CD4-positive, alpha-beta T cell (primary cell): ENCODE measurements at regions of chr1 and their contacts with region 1.

Region 1: GRCh38 chr1:17335821-17336710 is 28.1 kb downstream of the PADI4 start:
- DNase-seq: peak; percentile 41 to 71 (median 45)
- ATAC-seq: peak; percentile 43
- H3K4me3 ChIP-seq: no peak overlapping the region
- H3K4me3 Mint-ChIP-seq: no peak overlapping the region
- H3K27ac ChIP-seq: no peak overlapping the region
- H3K27ac Mint-ChIP-seq: no peak overlapping the region
- H3K4me1 ChIP-seq: peaks cover 3% of the 10 kb centered on the region
- H3K4me1 Mint-ChIP-seq: no peaks in the 10 kb centered on the region
- H3K27me3 ChIP-seq: peaks cover 2 to 3% of the 10 kb centered on the region in 2 experiments
- H3K27me3 Mint-ChIP-seq: peaks cover 25% of the 10 kb centered on the region
- CTCF ChIP-seq: peak; percentile 72

Region 2: GRCh38 chr1:17027403-17027802 is 308.7 kb before region 1 on chr1:
- CTCF ChIA-PET with region 1: no interaction called
- POLR2A ChIA-PET with region 1: no interaction called
- intact Hi-C with region 1: no loop called
- DNase-seq: no peak
- ATAC-seq: no peak
- H3K4me3 ChIP-seq: no peak overlapping the region
- H3K4me3 Mint-ChIP-seq: no peak overlapping the region
- H3K27ac ChIP-seq: no peak overlapping the region
- H3K27ac Mint-ChIP-seq: no peak overlapping the region
- H3K4me1 ChIP-seq: no peaks in the 10 kb centered on the region
- H3K4me1 Mint-ChIP-seq: no peaks in the 10 kb centered on the region
- H3K27me3 ChIP-seq: no peaks in the 10 kb centered on the region
- H3K27me3 Mint-ChIP-seq: no peaks in the 10 kb centered on the region
- CTCF ChIP-seq: no peak

Region 3: GRCh38 chr1:17059739-17060460 is 276.2 kb before region 1 on chr1:
- CTCF ChIA-PET with region 1: no interaction called
- POLR2A ChIA-PET with region 1: no interaction called
- intact Hi-C with region 1: loop called in 1 of 2 experiments (anchors 5 kb)
- DNase-seq: peak in 7 of 14 experiments; percentile 6 to 72 (median 25)
- ATAC-seq: peak; percentile 68
- H3K4me3 ChIP-seq: no peak overlapping the region
- H3K4me3 Mint-ChIP-seq: no peak overlapping the region
- H3K27ac ChIP-seq: no peak overlapping the region
- H3K27ac Mint-ChIP-seq: no peak overlapping the region
- H3K4me1 ChIP-seq: no peaks in the 10 kb centered on the region
- H3K4me1 Mint-ChIP-seq: no peaks in the 10 kb centered on the region
- H3K27me3 ChIP-seq: no peaks in the 10 kb centered on the region
- H3K27me3 Mint-ChIP-seq: peaks cover 10% of the 10 kb centered on the region
- CTCF ChIP-seq: no peak

Region 4: GRCh38 chr1:17125756-17126237 is 210.3 kb before region 1 on chr1:
- CTCF ChIA-PET with region 1: no interaction called
- POLR2A ChIA-PET with region 1: no interaction called
- intact Hi-C with region 1: loop called (anchors 5 to 10 kb)
- DNase-seq: peak; percentile 66 to 91 (median 80)
- ATAC-seq: peak; percentile 76
- H3K4me3 ChIP-seq: no peak overlapping the region
- H3K4me3 Mint-ChIP-seq: no peak overlapping the region
- H3K27ac ChIP-seq: no peak overlapping the region
- H3K27ac Mint-ChIP-seq: no peak overlapping the region
- H3K4me1 ChIP-seq: peaks cover 4% of the 10 kb centered on the region
- H3K4me1 Mint-ChIP-seq: peaks cover 5% of the 10 kb centered on the region
- H3K27me3 ChIP-seq: no peaks in the 10 kb centered on the region
- H3K27me3 Mint-ChIP-seq: peaks cover 21% of the 10 kb centered on the region
- CTCF ChIP-seq: peak; percentile 97

Region 5: DNA sequence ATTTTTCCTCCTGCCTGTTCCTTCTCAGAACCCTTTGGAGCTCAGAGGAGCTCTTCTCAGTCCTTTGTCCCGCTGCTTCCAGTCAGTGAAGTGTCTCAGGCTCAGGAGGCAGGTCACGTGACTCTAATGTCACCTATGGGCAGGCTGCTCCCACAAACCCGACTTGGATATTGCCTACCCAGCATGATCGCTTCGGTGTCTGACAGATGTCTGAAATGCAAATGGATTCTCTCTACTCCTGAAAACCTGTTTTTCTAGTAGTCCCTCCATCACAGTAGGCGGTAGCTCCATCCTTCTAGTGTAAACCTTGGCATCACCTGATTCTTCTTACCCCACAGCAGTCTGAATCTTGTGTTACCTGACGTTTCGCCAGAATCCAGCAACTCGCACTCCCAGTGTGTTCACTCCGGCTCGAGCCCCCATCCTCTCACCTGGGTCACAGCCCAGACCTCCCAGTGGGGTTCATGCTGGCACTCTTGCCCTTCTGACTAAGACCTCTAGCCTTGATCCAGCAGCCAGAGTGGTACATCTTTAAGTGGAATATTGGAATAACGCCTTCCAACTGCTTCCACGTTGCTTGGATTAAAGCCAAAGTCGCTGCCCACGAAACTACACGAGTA is 41.4 kb after region 1 on chr1:
- CTCF ChIA-PET with region 1: no interaction called
- POLR2A ChIA-PET with region 1: no interaction called
- intact Hi-C with region 1: no loop called
- DNase-seq: no peak
- ATAC-seq: no peak
- H3K4me3 ChIP-seq: no peak overlapping the region
- H3K4me3 Mint-ChIP-seq: no peak overlapping the region
- H3K27ac ChIP-seq: no peak overlapping the region
- H3K27ac Mint-ChIP-seq: no peak overlapping the region
- H3K4me1 ChIP-seq: no peaks in the 10 kb centered on the region
- H3K4me1 Mint-ChIP-seq: no peaks in the 10 kb centered on the region
- H3K27me3 ChIP-seq: peaks cover 3 to 7% of the 10 kb centered on the region in 2 experiments
- H3K27me3 Mint-ChIP-seq: peaks cover 19% of the 10 kb centered on the region
- CTCF ChIP-seq: no peak

Region 6: DNA sequence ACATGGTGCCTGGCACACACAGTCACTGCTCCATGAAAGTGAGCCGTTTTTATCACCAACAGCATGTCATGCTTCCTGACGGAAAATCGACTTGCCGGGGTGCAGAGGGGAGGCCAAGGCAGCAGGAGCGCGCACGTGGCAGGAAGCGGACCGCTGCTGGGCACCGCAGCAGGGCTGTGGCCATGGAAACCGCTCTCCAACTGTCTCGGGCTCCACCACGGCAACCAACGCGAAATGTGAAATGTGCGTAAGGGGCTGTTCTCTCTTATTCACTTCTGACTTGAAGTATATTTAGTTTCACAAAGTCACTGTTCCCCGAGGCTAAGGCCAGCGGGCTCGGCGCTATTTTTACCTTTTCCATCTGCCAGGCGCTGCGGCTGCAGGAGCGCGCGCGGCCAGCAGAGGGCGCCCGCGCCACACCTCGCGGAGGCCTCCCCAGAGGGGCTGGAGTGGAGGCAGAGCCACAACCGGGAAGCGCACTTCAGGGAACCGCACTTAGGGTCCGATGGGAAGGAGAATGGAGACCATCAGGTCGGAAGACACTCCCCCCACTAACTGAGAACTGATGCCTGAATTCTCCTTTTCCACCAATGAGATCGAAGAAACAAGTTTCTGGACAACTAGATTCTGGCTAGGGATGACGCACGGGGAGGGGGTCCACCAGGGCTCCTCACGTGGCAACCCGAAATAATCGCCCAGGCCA is 83.7 kb after region 1 on chr1:
- CTCF ChIA-PET with region 1: no interaction called
- POLR2A ChIA-PET with region 1: no interaction called
- intact Hi-C with region 1: no loop called
- DNase-seq: peak; percentile 39 to 82 (median 62)
- ATAC-seq: peak; percentile 86
- H3K4me3 ChIP-seq: no peak overlapping the region
- H3K4me3 Mint-ChIP-seq: peak overlapping the region; percentile 38
- H3K27ac ChIP-seq: no peak overlapping the region
- H3K27ac Mint-ChIP-seq: peak overlapping the region; percentile 8
- H3K4me1 ChIP-seq: peaks cover 6% of the 10 kb centered on the region
- H3K4me1 Mint-ChIP-seq: peaks cover 4% of the 10 kb centered on the region
- H3K27me3 ChIP-seq: no peaks in the 10 kb centered on the region
- H3K27me3 Mint-ChIP-seq: no peaks in the 10 kb centered on the region
- CTCF ChIP-seq: peak; percentile 99

Region 7: GRCh38 chr1:18385239-18385790 is 1049.2 kb after region 1 on chr1:
- CTCF ChIA-PET with region 1: no interaction called
- POLR2A ChIA-PET with region 1: no interaction called
- intact Hi-C with region 1: no loop called
- DNase-seq: no peak
- ATAC-seq: no peak
- H3K4me3 ChIP-seq: no peak overlapping the region
- H3K4me3 Mint-ChIP-seq: no peak overlapping the region
- H3K27ac ChIP-seq: no peak overlapping the region
- H3K27ac Mint-ChIP-seq: no peak overlapping the region
- H3K4me1 ChIP-seq: no peaks in the 10 kb centered on the region
- H3K4me1 Mint-ChIP-seq: no peaks in the 10 kb centered on the region
- H3K27me3 ChIP-seq: peaks cover 3 to 9% of the 10 kb centered on the region in 2 experiments
- H3K27me3 Mint-ChIP-seq: peaks cover 56% of the 10 kb centered on the region
- CTCF ChIP-seq: no peak